ENCODE measurements at regions of chr10 and their contacts with region 1.

Region 1: DNA sequence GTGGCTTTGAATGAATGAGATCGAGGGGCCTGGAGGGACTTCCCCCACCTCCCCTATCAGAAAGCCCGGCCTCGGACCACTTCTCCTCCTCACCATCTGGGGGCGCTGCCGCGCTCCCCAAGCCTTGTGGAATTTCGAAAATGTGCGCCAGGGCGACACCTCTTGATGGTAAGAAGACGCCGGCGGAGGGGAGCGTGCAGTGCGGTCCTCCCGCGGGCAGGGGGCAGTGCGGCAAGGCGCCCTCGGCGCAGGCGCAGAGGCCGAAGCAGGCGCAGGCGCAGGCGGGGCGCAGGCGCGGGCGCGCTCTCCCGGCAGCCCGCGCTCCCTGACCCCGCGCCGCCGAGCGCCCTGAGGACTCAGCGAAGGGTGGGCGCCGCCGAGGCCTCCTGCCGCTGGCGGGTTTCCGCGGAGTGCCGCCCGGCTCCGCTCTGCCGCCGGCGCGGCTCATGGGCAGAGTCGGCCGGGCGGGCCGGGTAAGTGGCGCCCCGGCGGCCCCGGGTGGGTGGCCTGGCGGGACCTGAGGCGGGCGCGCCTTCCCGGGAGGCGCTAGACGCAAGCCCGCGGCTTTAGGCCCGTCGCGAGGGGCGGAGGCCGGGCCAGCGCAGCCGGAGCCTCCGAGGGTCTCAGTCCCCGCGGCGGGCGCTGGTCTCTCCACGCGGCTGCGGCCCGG is at the start of gene RBM17:
- DNase-seq: peak; percentile 96
- H3K4me3 ChIP-seq: peak within 1 kb of the TSS; percentile 82
- H3K27ac ChIP-seq: peak within 1 kb of the TSS; percentile 69
- H3K4me1 ChIP-seq: no peaks in the 10 kb centered on the region
- H3K27me3 ChIP-seq: no peaks in the 10 kb centered on the region
- CTCF ChIP-seq: peak; percentile 99
- total RNA-seq, gene RBM17: 80.3 to 110 TPM

Region 2: GRCh38 chr10:5948999-5949759 is 139.7 kb before region 1 on chr10:
- intact Hi-C with region 1: loop called (anchors 10 kb)
- DNase-seq: peak; percentile 70
- H3K4me3 ChIP-seq: no peak overlapping the region
- H3K27ac ChIP-seq: no peak overlapping the region
- H3K4me1 ChIP-seq: no peaks in the 10 kb centered on the region
- H3K27me3 ChIP-seq: no peaks in the 10 kb centered on the region
- CTCF ChIP-seq: peak; percentile 48

Region 3: GRCh38 chr10:6014241-6014761 is 74.6 kb before region 1 on chr10:
- intact Hi-C with region 1: loop called (anchors 5 kb)
- DNase-seq: peak; percentile 77
- H3K4me3 ChIP-seq: no peak overlapping the region
- H3K27ac ChIP-seq: no peak overlapping the region
- H3K4me1 ChIP-seq: peaks cover 4% of the 10 kb centered on the region
- H3K27me3 ChIP-seq: no peaks in the 10 kb centered on the region
- CTCF ChIP-seq: peak; percentile 79